ENCODE measurements at regions of chr2 and their contacts with region 1.

Region 1: GRCh38 chr2:172339371-172340010 is 87.9 kb upstream of the ITGA6 start:
- DNase-seq: peak in 1 of 3 donors; percentile 14
- H3K4me3 ChIP-seq: peak overlapping the region in 1 of 3 experiments; percentile 68
- H3K4me3 Mint-ChIP-seq: peak overlapping the region; percentile 68 to 92
- H3K27ac ChIP-seq: no peak overlapping the region
- H3K27ac Mint-ChIP-seq: peak overlapping the region in 2 of 7 donors; percentile 19 to 40
- H3K4me1 ChIP-seq: peaks cover 14 to 20% of the 10 kb centered on the region in 2 donors
- H3K4me1 Mint-ChIP-seq: peaks cover 30% of the 10 kb centered on the region
- H3K27me3 ChIP-seq: no peaks in the 10 kb centered on the region
- H3K27me3 Mint-ChIP-seq: peaks cover 0 to 6% (median 0%) of the 10 kb centered on the region in 3 donors
- CTCF ChIP-seq: no peak

Region 2: GRCh38 chr2:172021955-172022354 is 317.5 kb before region 1 on chr2:
- intact Hi-C with region 1: no loop called
- DNase-seq: no peak
- H3K4me3 ChIP-seq: no peak overlapping the region
- H3K4me3 Mint-ChIP-seq: no peak overlapping the region
- H3K27ac ChIP-seq: no peak overlapping the region
- H3K27ac Mint-ChIP-seq: no peak overlapping the region
- H3K4me1 ChIP-seq: peaks cover 22 to 23% of the 10 kb centered on the region in 2 donors
- H3K4me1 Mint-ChIP-seq: peaks cover 24% of the 10 kb centered on the region
- H3K27me3 ChIP-seq: no peaks in the 10 kb centered on the region
- H3K27me3 Mint-ChIP-seq: no peaks in the 10 kb centered on the region
- CTCF ChIP-seq: no peak

Region 3: DNA sequence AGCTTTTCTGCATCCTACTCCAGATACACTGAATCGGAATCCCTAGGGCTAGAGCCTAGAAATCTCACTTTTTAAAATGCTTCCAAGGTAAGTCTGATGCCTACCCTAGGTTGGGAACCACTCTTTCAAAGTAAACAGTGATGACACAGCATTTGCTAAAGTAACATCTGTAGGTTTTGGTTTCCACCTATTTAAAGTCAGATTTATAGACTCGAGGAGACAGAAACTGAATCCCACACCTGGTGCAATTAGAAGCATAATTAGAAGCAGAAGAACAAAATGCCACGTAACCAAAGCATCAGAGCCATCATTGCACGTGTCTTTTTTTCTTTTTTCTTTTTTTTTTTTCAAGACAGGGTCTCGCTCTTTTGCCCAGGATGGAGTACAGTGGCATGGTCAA is 257.3 kb after region 1 on chr2:
- intact Hi-C with region 1: loop called in 1 of 2 experiments (anchors 10 kb)
- DNase-seq: no peak
- H3K4me3 ChIP-seq: no peak overlapping the region
- H3K4me3 Mint-ChIP-seq: no peak overlapping the region
- H3K27ac ChIP-seq: no peak overlapping the region
- H3K27ac Mint-ChIP-seq: no peak overlapping the region
- H3K4me1 ChIP-seq: no peaks in the 10 kb centered on the region
- H3K4me1 Mint-ChIP-seq: no peaks in the 10 kb centered on the region
- H3K27me3 ChIP-seq: no peaks in the 10 kb centered on the region
- H3K27me3 Mint-ChIP-seq: peaks cover 0 to 2% (median 2%) of the 10 kb centered on the region in 3 donors
- CTCF ChIP-seq: no peak